Right ventricle myocardium superior (tissue), 1 donor: ENCODE measurements at regions of chr19 and their contacts with region 1.

Region 1: GRCh38 chr19:10388957-10389356 is 8.6 kb upstream of the TYK2 start:
- DNase-seq: peak; percentile 93
- ATAC-seq: peak; percentile 75

Region 2: DNA sequence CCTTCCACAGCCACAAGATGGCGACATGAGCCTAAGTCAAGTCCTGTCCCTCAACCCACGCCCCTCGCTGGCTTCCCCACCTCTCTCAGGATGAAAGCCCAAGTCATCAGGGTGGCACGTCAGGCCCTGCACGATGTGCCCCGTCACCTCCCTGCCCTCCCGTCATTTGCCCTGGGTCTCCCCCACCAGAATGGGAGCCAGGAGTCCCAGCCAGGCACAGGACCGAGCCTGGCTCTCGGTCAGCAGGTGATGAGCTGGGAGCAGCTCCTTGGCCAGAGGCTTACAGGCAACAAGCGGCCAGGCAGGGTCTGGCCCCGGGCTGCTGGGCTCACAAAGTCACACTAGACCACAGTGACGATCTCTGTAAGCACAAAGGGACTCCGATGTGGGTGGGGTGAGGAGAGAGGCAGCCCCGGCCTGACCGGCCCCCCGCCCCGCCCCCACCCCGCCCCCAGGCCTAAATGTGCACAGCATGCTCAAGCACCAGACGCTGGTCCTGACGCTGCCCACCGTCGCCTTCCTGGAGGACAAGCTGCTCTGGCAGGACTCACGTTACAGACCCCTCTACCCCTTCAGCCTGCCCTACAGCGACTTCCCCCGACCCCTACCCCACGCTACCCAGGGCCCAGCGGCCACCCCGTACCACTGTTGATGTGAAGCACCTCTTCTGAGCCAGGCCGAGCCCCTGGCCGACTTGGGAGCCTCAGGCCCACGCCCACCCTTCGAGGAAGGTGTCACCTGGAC is 129.6 kb before region 1 on chr19:
- intact Hi-C with region 1: loop called (anchors 5 kb)
- DNase-seq: peak; percentile 89
- ATAC-seq: peak; percentile 65

Region 3: DNA sequence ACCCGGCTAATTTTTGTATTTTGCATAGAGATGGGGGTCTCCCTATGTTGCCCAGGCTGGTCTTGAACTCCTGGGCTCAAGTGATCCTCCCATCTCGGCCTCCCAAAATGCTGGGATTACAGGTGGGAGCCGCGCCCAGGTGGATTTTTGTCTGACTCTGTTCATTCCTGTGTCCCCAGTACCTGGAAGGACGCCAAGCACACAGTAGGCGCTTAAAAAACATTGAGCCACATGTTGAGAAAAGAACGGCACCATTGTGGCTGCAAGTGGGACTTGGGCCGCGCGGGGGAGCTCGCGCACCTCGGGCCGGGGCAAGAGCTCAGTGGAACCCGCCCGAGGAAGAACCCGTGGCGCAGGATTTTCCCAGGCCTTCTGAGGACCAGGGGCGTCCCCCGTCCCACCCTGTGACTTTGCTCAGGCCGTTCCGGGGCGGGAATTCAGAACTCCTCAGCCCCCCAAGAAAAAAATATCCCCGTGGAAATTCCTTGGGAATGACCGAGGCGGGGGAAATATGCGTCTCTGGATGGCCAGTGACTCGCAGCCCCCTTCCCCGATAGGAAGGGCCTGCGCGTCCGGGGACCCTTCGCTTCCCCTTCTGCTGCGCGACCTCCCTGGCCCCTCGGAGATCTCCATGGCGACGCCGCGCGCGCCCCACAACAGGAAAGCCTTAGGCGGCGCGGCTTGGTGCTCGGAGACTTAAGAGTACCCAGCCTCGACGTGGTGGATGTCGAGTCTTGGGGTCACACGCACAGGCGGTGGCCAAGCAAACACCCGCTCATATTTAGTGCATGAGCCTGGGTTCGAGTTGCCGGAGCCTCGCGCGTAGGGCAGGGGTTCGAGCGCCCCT is 119.4 kb before region 1 on chr19:
- intact Hi-C with region 1: loop called (anchors 2 kb)
- DNase-seq: peak; percentile 94
- ATAC-seq: peak; percentile 86